Mammary epithelial cell (primary cell): ENCODE measurements at regions of chr7 and their contacts with region 1.

Region 1: DNA sequence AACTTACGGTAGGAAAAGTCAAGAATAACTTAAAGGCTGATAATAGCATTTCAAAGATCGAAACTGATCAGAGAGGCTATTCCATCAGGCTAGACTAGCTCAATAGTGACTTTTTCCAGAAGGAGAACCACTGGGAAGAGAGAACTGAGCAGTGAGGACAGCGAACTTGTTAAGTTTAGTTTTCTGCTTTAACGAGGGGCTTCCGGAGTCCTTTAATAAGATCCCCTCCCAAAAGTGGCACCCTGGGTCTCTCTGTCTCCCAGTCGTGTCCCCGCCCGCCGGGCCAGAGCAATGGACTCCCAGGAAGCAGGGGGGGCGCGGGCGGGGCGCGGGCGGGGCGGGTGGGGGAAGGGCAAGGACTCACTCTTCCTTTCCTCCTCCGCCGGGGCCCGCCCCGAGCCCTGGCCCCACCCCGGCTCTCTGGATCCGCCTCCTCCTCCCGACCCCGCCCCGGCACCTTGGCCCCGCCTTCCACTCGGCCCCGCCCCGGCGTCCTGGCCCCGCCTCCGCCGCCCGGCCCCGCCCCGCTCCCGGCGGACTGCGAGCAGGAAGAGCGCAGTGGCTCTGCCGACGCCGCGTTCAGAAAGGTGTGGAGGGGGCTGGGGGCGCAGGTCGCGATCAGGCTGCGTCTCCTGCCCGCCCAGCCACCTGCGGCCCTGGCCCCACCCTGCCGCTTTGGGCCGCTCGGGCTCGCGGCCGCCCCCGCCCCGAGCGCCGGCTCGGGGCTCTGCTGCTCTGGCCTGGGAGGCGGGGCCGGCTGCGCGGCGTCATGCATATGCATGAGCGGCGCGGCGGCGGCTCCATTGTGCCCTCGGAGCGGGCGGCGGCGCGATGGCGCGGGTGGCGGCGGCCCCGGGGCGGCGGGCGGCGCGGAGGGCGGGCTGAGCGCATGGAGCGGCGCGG is at the start of gene ZMIZ2:
- DNase-seq: peak; percentile 83
- H3K4me3 ChIP-seq: peak within 1 kb of the TSS; percentile 44 to 97 (median 91)
- H3K27ac ChIP-seq: peak within 1 kb of the TSS; percentile 66
- H3K4me1 ChIP-seq: peaks cover 27% of the 10 kb centered on the region
- H3K27me3 ChIP-seq: no peaks in the 10 kb centered on the region
- CTCF ChIP-seq: no peak
- total RNA-seq, gene ZMIZ2: 8.0 to 55.6 TPM

Region 2: DNA sequence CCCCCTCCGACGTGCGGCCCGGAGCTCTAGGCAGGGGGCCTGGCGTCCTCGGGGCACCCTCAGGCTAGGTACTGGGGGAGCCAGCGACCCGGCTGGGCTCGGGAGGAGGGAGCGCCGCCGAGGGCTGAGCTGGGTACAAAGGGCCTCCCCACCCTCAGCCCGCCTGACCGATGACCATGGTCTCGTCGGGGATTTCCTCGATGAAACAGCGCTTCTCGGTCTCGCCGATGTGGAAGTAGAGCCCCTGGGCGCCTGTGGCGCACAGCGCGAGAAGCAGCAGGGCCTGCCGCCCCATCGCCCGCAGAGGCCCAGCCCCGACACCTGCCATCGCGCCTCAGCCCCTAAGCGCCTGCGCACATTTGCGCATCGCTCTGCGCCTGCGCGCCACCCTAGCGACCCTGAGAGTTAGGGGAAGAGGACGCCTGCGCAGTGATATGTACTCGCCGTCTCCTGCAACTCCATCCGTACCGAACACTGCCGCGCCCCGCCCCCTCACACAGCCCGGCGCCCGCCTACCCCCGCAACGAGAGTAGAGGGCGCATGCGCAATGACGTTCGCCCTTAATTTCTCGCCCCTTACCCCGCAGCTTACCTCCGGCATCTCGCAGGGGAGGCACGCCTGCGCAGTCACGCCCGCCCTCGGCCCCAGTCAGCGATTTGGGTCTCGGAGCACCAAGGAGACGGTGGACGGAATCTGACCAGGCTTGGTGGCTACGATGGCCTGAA is 166.3 kb before region 1 on chr7 and contains the start of gene TMED4:
- CTCF ChIA-PET with region 1: no interaction called
- dilution Hi-C with region 1: no loop called
- in situ Hi-C with region 1: no loop called
- intact Hi-C with region 1: loop called (anchors 2 kb)
- DNase-seq: peak; percentile 97
- H3K4me3 ChIP-seq: peak within 1 kb of the TSS; percentile 62 to 88 (median 72)
- H3K27ac ChIP-seq: peak within 1 kb of the TSS; percentile 76
- H3K4me1 ChIP-seq: peaks cover 12% of the 10 kb centered on the region
- H3K27me3 ChIP-seq: no peaks in the 10 kb centered on the region
- CTCF ChIP-seq: no peak
- total RNA-seq, gene TMED4: 48.2 to 87.9 TPM

Region 3: DNA sequence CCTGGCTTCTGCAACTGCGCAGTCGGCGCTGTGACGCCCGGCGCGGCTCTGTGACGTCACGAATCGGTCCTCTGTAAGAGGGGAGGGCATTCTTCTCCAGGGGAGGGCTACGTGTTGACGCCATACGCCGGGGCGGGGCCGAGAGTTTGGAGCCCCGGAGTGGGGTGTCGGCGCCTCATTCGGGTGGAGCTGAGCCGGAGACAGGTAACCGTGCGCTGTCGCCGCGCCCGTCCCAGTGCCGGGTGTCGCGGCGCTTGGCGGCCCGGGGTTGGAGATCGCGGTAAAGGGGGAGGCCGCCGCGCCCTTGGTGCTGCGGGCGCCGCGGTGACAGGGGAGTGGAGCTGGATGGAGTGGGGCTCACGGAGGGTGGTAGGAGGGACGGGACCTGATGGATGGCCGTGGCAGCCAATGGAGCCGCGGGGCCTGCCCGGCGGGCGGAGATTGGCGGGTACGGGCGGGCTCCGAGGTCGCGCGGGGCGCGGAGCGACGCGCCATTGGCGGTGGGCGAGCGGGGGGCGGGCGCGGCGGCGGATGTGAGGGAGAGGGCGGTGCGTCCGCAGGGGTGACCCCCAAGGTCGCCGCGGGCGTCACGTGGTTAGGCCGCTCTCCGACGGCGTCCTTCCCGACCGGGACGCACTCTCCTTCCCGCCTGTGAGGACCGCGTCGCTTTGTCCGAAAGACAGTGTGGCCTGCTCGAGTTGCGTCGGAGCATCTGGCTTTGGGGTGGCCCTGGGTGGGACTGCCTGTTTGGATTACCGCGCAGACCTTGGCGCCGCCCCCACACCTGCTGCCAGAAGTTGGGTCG is 141.6 kb before region 1 on chr7 and contains the start of gene OGDH:
- CTCF ChIA-PET with region 1: no interaction called
- dilution Hi-C with region 1: no loop called
- in situ Hi-C with region 1: no loop called
- intact Hi-C with region 1: loop called (anchors 2 kb)
- DNase-seq: peak; percentile 97
- H3K4me3 ChIP-seq: peak within 1 kb of the TSS; percentile 71 to 98 (median 82)
- H3K27ac ChIP-seq: peak within 1 kb of the TSS; percentile 72
- H3K4me1 ChIP-seq: peaks cover 9% of the 10 kb centered on the region
- H3K27me3 ChIP-seq: no peaks in the 10 kb centered on the region
- CTCF ChIP-seq: no peak
- total RNA-seq, gene OGDH: 82.4 to 96.9 TPM

Region 4: GRCh38 chr7:44638611-44639557 is 109.4 kb before region 1 on chr7:
- CTCF ChIA-PET with region 1: no interaction called
- dilution Hi-C with region 1: no loop called
- in situ Hi-C with region 1: no loop called
- intact Hi-C with region 1: loop called (anchors 1 kb)
- DNase-seq: peak; percentile 89
- H3K4me3 ChIP-seq: no peak overlapping the region
- H3K27ac ChIP-seq: peak overlapping the region; percentile 98
- H3K4me1 ChIP-seq: peaks cover 47% of the 10 kb centered on the region
- H3K27me3 ChIP-seq: no peaks in the 10 kb centered on the region
- CTCF ChIP-seq: peak in 1 of 2 donors; percentile 15

Region 5: DNA sequence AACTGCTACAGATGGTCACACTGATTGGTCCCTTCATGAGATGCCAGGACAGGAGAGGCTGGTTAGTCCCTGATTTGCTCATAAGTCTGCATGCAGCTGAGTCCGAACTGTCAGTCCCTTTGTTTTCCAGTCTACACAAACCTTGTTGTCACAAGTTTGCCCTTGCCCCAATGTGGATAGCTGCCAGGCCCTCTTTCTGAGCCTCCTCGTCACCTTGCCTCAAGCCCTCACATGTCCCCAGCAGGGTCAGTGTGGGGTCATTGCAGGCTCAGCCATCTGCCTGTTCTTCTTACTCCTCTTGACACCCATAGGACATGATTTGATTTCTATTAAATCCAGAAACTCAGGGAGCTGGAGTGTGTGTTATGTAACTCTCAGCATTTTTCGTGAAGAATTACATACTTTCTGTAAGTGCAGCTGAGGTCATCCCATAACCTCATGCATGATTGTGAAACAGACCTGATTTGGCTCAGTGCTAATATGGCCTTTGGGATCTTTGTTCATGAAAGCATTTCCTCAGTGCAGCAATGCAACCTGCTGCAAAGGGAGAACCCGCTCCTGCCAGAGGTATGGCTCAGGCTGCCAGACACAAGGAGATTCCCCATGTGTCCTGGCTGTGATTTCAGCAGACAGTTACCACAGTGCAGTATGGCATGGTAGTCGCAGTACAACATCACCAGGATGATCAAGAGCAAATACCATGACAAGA is 69.7 kb before region 1 on chr7:
- CTCF ChIA-PET with region 1: no interaction called
- dilution Hi-C with region 1: no loop called
- in situ Hi-C with region 1: no loop called
- intact Hi-C with region 1: loop called (anchors 5 kb)
- DNase-seq: peak; percentile 71
- H3K4me3 ChIP-seq: no peak overlapping the region
- H3K27ac ChIP-seq: peak overlapping the region; percentile 11
- H3K4me1 ChIP-seq: peaks cover 21% of the 10 kb centered on the region
- H3K27me3 ChIP-seq: no peaks in the 10 kb centered on the region
- CTCF ChIP-seq: no peak

Region 6: GRCh38 chr7:44735403-44736165 is 12.7 kb before region 1 on chr7:
- CTCF ChIA-PET with region 1: no interaction called
- dilution Hi-C with region 1: no loop called
- in situ Hi-C with region 1: no loop called
- intact Hi-C with region 1: loop called (anchors 1 kb)
- DNase-seq: peak; percentile 97
- H3K4me3 ChIP-seq: no peak overlapping the region
- H3K27ac ChIP-seq: peak overlapping the region; percentile 91
- H3K4me1 ChIP-seq: peaks cover 18% of the 10 kb centered on the region
- H3K27me3 ChIP-seq: no peaks in the 10 kb centered on the region
- CTCF ChIP-seq: peak in 1 of 2 donors; percentile 3

Region 7: DNA sequence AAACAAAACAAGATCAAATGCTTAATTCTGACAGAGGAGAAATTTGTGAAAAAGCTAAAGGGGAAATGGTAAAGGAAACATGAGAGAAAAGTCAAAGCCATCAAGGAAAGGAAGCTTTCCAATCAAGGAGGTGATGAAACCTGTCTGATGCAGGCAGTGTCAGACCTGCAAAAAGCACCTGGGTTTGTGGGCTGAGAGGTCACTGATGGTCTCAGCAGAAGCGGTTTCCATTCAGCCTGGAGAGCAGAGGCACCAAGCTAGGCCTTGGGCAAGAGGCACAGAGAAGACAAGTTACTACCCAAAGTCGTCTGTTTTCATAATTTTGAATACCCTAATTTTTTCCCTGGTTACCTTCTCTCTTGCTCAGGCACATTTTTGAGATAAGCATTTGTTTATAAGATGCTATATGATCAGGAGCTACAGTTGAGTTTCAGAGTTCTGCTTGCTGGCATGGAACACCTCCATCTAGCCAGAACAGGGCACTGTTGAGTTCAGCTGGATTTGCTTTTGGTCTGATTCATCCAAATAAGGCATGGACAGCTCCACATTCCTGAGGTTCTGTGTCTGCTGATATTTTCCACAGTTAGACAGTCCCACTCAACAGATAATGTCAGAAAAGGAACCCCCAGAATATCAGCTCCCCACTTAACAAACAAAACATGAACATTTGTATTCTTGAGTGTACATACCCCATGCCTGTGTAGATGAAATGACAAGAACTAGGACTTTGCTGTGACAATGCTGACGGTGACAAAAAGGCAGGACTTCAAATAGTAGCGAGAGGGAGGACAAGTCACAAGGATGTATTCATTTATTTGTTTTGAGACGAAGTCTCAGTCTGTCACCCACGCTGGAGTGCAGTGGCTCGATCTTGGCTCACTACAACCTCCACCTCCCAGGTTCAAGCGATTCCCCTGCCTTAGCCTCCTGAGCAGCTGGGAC is 43.3 kb after region 1 on chr7:
- CTCF ChIA-PET with region 1: no interaction called
- dilution Hi-C with region 1: no loop called
- in situ Hi-C with region 1: no loop called
- intact Hi-C with region 1: no loop called
- DNase-seq: no peak
- H3K4me3 ChIP-seq: no peak overlapping the region
- H3K27ac ChIP-seq: no peak overlapping the region
- H3K4me1 ChIP-seq: peaks cover 12% of the 10 kb centered on the region
- H3K27me3 ChIP-seq: no peaks in the 10 kb centered on the region
- CTCF ChIP-seq: peak in 1 of 2 donors; percentile 25

Region 8: GRCh38 chr7:44921607-44922359 is 173.5 kb after region 1 on chr7:
- CTCF ChIA-PET with region 1: no interaction called
- dilution Hi-C with region 1: no loop called
- in situ Hi-C with region 1: no loop called
- intact Hi-C with region 1: no loop called
- DNase-seq: peak; percentile 44
- H3K4me3 ChIP-seq: no peak overlapping the region
- H3K27ac ChIP-seq: no peak overlapping the region
- H3K4me1 ChIP-seq: no peaks in the 10 kb centered on the region
- H3K27me3 ChIP-seq: peaks cover 2% of the 10 kb centered on the region
- CTCF ChIP-seq: peak; percentile 73 to 90